ENCODE measurements at regions of chr22 and their contacts with region 1.

Region 1: DNA sequence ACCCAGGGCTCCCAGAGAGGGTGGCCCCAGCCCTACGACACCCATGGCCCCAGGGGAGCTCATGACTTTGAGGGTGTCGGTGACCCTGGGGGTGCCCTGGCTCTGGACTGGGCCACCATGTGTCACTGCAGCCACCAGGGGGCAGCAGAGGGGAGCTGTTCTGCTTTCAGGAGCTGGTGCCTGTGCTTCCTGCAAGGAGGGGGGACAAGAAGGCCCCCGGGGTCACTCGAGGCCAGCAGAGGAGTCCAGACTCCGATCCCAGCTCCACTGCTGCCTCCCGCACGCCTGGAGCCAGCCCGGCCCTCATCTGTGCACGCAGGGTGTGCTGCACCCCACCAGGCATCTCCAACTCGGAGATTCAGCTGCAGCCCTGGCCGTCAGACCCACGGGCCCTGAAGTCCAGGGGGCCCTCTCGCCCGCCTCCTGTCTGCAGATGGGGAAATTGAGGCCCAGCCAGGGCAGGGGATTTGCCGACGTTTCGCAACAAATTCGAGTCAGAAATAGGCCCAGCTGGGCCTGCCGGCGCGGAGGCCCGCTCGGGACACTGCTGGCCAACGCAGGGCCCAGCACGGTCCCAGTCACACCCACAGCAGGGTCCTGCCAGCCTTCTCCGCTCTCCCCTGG is 29.5 kb upstream of the WNT7B start:
- DNase-seq: peak; percentile 73 to 95 (median 88)
- ATAC-seq: peak; percentile 92
- H3K4me3 ChIP-seq: no peak overlapping the region
- H3K4me3 Mint-ChIP-seq: no peak overlapping the region
- H3K27ac ChIP-seq: no peak overlapping the region
- H3K27ac Mint-ChIP-seq: no peak overlapping the region
- H3K4me1 ChIP-seq: peaks cover 17% of the 10 kb centered on the region
- H3K4me1 Mint-ChIP-seq: peaks cover 10% of the 10 kb centered on the region
- H3K27me3 ChIP-seq: no peaks in the 10 kb centered on the region
- H3K27me3 Mint-ChIP-seq: no peaks in the 10 kb centered on the region
- CTCF ChIP-seq: peak; percentile 94

Region 2: GRCh38 chr22:46018831-46019230 is 12.3 kb after region 1 on chr22:
- CTCF ChIA-PET with region 1: interaction called, 21 read pairs
- POLR2A ChIA-PET with region 1: interaction called, 3 read pairs
- intact Hi-C with region 1: no loop called
- DNase-seq: no peak
- ATAC-seq: no peak
- H3K4me3 ChIP-seq: no peak overlapping the region
- H3K4me3 Mint-ChIP-seq: no peak overlapping the region
- H3K27ac ChIP-seq: no peak overlapping the region
- H3K27ac Mint-ChIP-seq: no peak overlapping the region
- H3K4me1 ChIP-seq: no peaks in the 10 kb centered on the region
- H3K4me1 Mint-ChIP-seq: peaks cover 2% of the 10 kb centered on the region
- H3K27me3 ChIP-seq: no peaks in the 10 kb centered on the region
- H3K27me3 Mint-ChIP-seq: peaks cover 2% of the 10 kb centered on the region
- CTCF ChIP-seq: no peak

Region 3: GRCh38 chr22:46078241-46079092 is 72.0 kb after region 1 on chr22:
- CTCF ChIA-PET with region 1: interaction called, 17 read pairs
- POLR2A ChIA-PET with region 1: no interaction called
- intact Hi-C with region 1: no loop called
- DNase-seq: no peak
- ATAC-seq: no peak
- H3K4me3 ChIP-seq: no peak overlapping the region
- H3K4me3 Mint-ChIP-seq: no peak overlapping the region
- H3K27ac ChIP-seq: no peak overlapping the region
- H3K27ac Mint-ChIP-seq: no peak overlapping the region
- H3K4me1 ChIP-seq: peaks cover 11% of the 10 kb centered on the region
- H3K4me1 Mint-ChIP-seq: peaks cover 19% of the 10 kb centered on the region
- H3K27me3 ChIP-seq: no peaks in the 10 kb centered on the region
- H3K27me3 Mint-ChIP-seq: no peaks in the 10 kb centered on the region
- CTCF ChIP-seq: no peak

Region 4: DNA sequence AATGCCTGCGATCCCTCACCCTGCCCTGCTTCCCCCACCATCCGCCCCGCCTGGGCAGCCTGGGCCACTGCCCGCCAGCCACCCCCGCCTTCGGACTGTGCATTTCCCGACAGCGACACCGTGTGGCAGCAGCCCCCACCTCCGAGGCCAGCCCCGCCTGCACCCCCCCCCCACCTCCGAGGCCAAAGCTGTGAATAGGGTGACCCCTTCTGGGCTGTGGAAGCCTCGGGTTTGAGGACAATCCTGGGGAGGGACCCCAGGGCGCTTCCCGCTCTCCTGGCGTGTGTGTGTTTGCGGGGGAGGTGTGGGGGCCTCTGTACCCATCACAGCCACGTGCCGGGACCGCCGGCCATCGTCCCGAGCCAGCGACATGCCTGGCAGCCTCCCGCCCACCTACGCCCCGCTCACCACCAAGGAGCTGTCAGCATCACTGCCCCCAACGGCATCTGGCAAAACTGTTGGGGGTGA is 110.0 kb after region 1 on chr22:
- CTCF ChIA-PET with region 1: interaction called, 206 read pairs
- POLR2A ChIA-PET with region 1: interaction called, 3 read pairs
- intact Hi-C with region 1: loop called (anchors 1 kb)
- DNase-seq: peak; percentile 70 to 90 (median 88)
- ATAC-seq: peak; percentile 97
- H3K4me3 ChIP-seq: no peak overlapping the region
- H3K4me3 Mint-ChIP-seq: no peak overlapping the region
- H3K27ac ChIP-seq: no peak overlapping the region
- H3K27ac Mint-ChIP-seq: no peak overlapping the region
- H3K4me1 ChIP-seq: peaks cover 5% of the 10 kb centered on the region
- H3K4me1 Mint-ChIP-seq: no peaks in the 10 kb centered on the region
- H3K27me3 ChIP-seq: no peaks in the 10 kb centered on the region
- H3K27me3 Mint-ChIP-seq: no peaks in the 10 kb centered on the region
- CTCF ChIP-seq: peak; percentile 70